ENCODE measurements at regions of chr1 and their contacts with region 1.

Region 1: GRCh38 chr1:72197786-72198185 is 84.6 kb downstream of the NEGR1 start:
- DNase-seq: no peak
- H3K4me3 ChIP-seq: no peak overlapping the region
- H3K27ac ChIP-seq: no peak overlapping the region
- H3K4me1 ChIP-seq: no peaks in the 10 kb centered on the region
- H3K27me3 ChIP-seq: no peaks in the 10 kb centered on the region
- CTCF ChIP-seq: no peak
- POLR2A ChIP-seq: no peak

Region 2: GRCh38 chr1:72186733-72187307 is 11.0 kb before region 1 on chr1:
- CTCF ChIA-PET with region 1: interaction called, 11 read pairs
- POLR2A ChIA-PET with region 1: no interaction called
- dilution Hi-C with region 1: no loop called
- intact Hi-C with region 1: no loop called
- DNase-seq: peak; percentile 51
- H3K4me3 ChIP-seq: no peak overlapping the region
- H3K27ac ChIP-seq: no peak overlapping the region
- H3K4me1 ChIP-seq: no peaks in the 10 kb centered on the region
- H3K27me3 ChIP-seq: no peaks in the 10 kb centered on the region
- CTCF ChIP-seq: peak; percentile 25 to 48
- POLR2A ChIP-seq: no peak

Region 3: GRCh38 chr1:72218141-72218739 is 20.5 kb after region 1 on chr1:
- CTCF ChIA-PET with region 1: no interaction called
- POLR2A ChIA-PET with region 1: no interaction called
- dilution Hi-C with region 1: no loop called
- intact Hi-C with region 1: no loop called
- DNase-seq: no peak
- H3K4me3 ChIP-seq: no peak overlapping the region
- H3K27ac ChIP-seq: no peak overlapping the region
- H3K4me1 ChIP-seq: no peaks in the 10 kb centered on the region
- H3K27me3 ChIP-seq: no peaks in the 10 kb centered on the region
- CTCF ChIP-seq: no peak
- POLR2A ChIP-seq: no peak

Region 4: DNA sequence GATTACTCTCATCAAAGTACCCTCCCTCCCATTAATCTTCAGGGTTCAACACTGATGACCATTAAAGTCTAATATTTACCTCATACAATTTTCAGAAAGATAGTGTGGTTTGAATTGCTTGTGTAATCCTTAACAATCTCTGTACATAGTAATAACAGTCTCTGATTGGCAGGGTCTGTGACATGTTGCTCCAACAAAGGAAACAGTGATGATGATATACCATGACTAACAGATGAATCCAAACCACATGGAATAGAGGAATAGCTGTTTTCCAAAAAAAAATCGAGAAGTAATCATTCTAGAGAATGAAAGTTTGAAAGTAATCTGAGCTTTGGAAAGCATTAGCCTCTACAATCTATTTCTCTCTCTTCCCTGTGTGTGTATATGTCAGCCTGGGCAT is 694.7 kb after region 1 on chr1:
- CTCF ChIA-PET with region 1: no interaction called
- POLR2A ChIA-PET with region 1: no interaction called
- dilution Hi-C with region 1: no loop called
- intact Hi-C with region 1: no loop called
- DNase-seq: no peak
- H3K4me3 ChIP-seq: no peak overlapping the region
- H3K27ac ChIP-seq: no peak overlapping the region
- H3K4me1 ChIP-seq: no peaks in the 10 kb centered on the region
- H3K27me3 ChIP-seq: no peaks in the 10 kb centered on the region
- CTCF ChIP-seq: no peak
- POLR2A ChIP-seq: no peak